Colonic mucosa (tissue), 4 donors: ENCODE measurements at regions of chr16 and their contacts with region 1.

Region 1: DNA sequence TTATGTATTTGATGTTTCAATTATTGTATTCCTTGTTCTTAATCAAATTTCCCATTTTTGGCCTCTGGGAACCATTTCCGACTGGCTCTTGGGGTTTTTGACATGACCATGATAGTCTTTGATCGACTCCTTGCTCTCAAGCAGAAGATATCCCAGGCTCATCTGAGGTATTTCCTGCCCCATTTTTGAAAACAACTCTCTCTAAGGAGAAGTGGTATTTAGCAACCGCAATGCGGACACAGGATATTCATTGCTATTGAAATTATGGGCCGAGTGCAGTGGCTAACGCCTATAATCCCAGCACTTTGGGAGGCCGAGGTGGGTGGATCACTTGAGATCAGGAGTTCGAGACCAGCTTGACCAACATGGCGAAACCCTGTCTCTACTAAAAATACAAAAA is 5.5 kb downstream of the TANGO6 start:
- DNase-seq: no peak
- H3K4me3 ChIP-seq: no peak overlapping the region
- H3K27ac ChIP-seq: no peak overlapping the region
- H3K4me1 ChIP-seq: no peaks in the 10 kb centered on the region
- H3K27me3 ChIP-seq: no peaks in the 10 kb centered on the region
- CTCF ChIP-seq: no peak

Region 2: GRCh38 chr16:69123910-69124309 is 275.1 kb after region 1 on chr16:
- intact Hi-C with region 1: loop called (anchors 5 kb)
- DNase-seq: peak; percentile 70
- H3K4me3 ChIP-seq: no peak overlapping the region
- H3K27ac ChIP-seq: no peak overlapping the region
- H3K4me1 ChIP-seq: no peaks in the 10 kb centered on the region
- H3K27me3 ChIP-seq: no peaks in the 10 kb centered on the region
- CTCF ChIP-seq: peak; percentile 61